PC-3 (cell line): ENCODE measurements at regions of chr6 and their contacts with region 1.

Region 1: DNA sequence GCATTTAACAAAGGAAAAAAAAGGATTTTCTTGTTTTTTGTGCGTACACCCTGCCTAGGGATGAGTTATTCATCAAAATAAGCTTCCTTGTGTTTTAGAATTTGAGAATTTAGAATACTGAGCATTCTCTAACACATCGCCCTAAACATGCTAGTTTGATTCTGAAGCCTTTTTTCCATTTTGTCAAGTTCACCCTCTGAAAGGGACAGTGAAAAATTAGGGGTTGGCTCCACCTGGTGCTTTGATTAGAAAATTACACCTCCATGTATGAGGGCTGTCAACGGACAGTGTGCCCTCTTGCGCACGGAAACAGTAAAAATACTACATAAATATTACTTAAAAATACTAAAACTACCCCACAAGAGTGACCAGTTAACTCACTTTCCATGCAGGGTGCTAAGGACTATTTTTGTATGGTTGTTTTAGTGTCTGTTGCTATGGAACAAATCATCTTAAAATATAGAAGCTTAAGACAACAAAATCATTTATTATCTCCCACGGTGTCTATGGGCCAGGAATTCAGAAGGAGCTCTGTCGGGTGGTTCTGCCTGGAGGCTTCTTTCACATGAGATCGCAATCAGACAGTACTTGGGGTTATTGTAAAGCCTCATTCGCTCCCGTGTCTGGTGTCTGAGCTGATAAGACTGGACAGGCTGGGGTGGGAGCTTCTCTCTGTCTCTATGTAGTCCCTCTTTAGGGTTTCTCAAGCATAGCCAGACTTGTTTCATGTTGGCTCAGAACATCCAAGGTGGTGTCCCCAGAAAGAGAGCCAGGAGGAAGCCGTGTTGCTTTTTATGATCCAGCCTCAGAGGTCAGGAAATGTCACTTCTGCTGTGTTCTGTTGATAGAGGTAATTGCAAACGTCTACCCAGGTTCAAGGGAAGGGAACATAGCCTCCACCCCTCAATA is 41.1 kb upstream of the TMEM170B start:
- DNase-seq: peak; percentile 87
- ATAC-seq: peak; percentile 74
- H3K4me3 ChIP-seq: no peak overlapping the region
- H3K27ac ChIP-seq: peak overlapping the region; percentile 22; the same call in 1 of the 2 replicates
- H3K4me1 ChIP-seq: peaks cover 26% of the 10 kb centered on the region
- H3K27me3 ChIP-seq: no peaks in the 10 kb centered on the region
- CTCF ChIP-seq: peak; percentile 97

Region 2: GRCh38 chr6:10954590-10955010 is 541.8 kb before region 1 on chr6:
- CTCF ChIA-PET with region 1: interaction called, 4 read pairs
- POLR2A ChIA-PET with region 1: no interaction called
- intact Hi-C with region 1: loop called (anchors 1 kb)
- DNase-seq: peak; percentile 83
- ATAC-seq: peak; percentile 64
- H3K4me3 ChIP-seq: no peak overlapping the region
- H3K27ac ChIP-seq: no peak overlapping the region
- H3K4me1 ChIP-seq: peaks cover 10% of the 10 kb centered on the region
- H3K27me3 ChIP-seq: peaks cover 11% of the 10 kb centered on the region
- CTCF ChIP-seq: peak; percentile 92

Region 3: DNA sequence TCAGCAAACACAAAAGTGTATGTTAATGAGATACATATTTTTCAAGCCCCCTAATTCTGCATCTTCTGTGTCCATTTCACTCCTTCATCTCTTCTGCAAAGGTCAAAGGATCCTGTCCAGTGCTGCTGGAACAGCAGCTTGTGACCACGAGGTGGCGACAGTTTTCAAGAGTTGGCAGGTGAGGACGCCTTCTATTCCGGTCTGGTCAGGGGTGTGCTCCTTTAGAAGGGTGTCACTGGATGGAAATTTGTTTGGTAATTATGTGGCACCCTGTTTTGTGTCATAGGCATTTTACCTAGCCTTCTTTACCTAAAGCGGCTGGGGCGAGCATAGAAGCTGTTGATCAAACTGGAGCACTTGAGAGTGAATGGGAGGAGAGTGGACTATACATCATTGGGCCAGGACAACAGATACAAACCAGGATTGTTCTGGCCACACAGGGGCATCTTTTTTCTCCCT is 352.0 kb before region 1 on chr6:
- CTCF ChIA-PET with region 1: interaction called, 4 read pairs
- POLR2A ChIA-PET with region 1: no interaction called
- intact Hi-C with region 1: loop called (anchors 1 kb)
- DNase-seq: peak; percentile 86
- ATAC-seq: peak; percentile 92
- H3K4me3 ChIP-seq: no peak overlapping the region
- H3K27ac ChIP-seq: no peak overlapping the region
- H3K4me1 ChIP-seq: peaks cover 15% of the 10 kb centered on the region
- H3K27me3 ChIP-seq: no peaks in the 10 kb centered on the region
- CTCF ChIP-seq: peak; percentile 99

Region 4: GRCh38 chr6:11172501-11173332 is 323.7 kb before region 1 on chr6:
- CTCF ChIA-PET with region 1: no interaction called
- POLR2A ChIA-PET with region 1: no interaction called
- intact Hi-C with region 1: loop called (anchors 1 kb)
- DNase-seq: peak; percentile 71
- ATAC-seq: peak; percentile 59
- H3K4me3 ChIP-seq: no peak overlapping the region
- H3K27ac ChIP-seq: no peak overlapping the region
- H3K4me1 ChIP-seq: no peaks in the 10 kb centered on the region
- H3K27me3 ChIP-seq: no peaks in the 10 kb centered on the region
- CTCF ChIP-seq: peak; percentile 93

Region 5: DNA sequence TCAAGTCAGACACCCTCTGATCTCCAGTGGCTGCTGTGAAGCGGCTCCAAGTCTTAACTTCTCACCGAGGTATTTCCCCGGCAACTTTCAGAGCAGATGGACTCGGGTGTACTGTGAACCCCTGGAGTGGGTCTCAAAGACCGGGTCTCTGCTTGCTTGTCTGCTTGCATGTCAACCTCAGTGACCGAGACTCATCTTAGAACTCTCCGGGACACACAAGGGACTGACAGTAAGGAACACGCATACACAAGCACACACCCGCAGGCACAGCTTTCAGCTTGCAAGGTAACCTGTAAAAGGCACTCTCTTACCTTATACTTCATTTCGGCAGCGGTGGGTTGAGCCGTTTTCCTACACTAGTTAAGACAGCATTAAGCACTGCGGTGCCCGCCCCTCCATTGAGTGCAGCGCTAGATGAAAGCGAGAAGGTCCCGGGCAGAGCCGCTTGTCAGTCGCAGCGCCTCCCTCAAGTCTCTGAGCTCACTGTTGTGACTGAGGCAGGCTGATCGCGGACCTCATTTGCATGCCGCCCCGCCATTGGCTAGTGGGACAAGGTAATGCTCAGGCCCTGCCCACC is 264.1 kb before region 1 on chr6 and contains the start of gene NEDD9:
- CTCF ChIA-PET with region 1: no interaction called
- POLR2A ChIA-PET with region 1: interaction called, 3 read pairs
- intact Hi-C with region 1: loop called (anchors 1 kb)
- DNase-seq: peak; percentile 96
- ATAC-seq: peak; percentile 93
- H3K4me3 ChIP-seq: peak within 1 kb of the TSS; percentile 97
- H3K27ac ChIP-seq: peak within 1 kb of the TSS; percentile 81
- H3K4me1 ChIP-seq: peaks cover 36% of the 10 kb centered on the region
- H3K27me3 ChIP-seq: no peaks in the 10 kb centered on the region
- CTCF ChIP-seq: no peak
- total RNA-seq, gene NEDD9: 12.1 and 13.9 TPM in 2 replicates

Region 6: DNA sequence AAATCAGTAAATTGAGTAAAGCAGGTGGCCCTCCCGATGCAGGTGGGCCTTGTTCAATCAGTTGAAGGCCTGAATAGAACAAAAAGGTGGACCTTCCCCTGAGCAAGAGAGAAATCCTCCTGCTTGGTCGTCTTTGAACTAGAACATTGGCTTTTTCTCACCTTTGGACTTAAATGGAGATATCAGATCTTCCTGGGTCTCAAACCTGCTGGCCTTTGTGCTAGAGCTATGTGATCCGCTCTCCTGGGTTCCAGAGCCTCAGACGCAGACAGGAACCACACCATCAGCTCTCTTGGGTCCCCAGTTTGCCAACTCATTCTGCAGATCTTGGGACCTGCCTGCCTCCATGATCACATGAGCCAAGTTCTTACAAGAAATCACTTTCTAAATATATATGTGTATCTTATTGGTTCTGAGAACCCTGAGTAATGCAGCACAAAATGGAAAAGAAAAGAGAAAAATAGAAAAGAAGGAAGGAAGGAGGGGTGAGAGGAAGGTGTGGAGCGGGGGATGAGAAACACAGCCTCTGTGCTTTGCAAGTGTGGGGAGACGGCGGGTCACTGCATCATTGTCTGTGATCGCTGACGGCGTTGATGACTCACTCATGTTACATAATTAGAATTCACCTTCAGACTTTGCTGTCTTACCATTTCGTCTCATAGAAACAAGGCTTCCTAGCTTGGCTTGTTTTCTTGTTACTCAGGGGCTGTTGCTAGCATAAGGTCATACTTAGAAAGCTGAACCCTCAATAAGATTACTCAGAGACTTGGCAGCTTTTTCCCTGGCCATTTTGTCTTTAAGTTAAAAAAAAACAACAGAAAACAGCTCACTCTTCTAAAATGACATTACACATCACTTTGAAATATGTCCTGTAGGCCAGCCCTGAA is 178.3 kb before region 1 on chr6:
- CTCF ChIA-PET with region 1: interaction called, 3 read pairs
- POLR2A ChIA-PET with region 1: no interaction called
- intact Hi-C with region 1: loop called (anchors 2 kb)
- DNase-seq: peak; percentile 98
- ATAC-seq: peak; percentile 61
- H3K4me3 ChIP-seq: no peak overlapping the region
- H3K27ac ChIP-seq: peak overlapping the region; percentile 89
- H3K4me1 ChIP-seq: peaks cover 62% of the 10 kb centered on the region
- H3K27me3 ChIP-seq: no peaks in the 10 kb centered on the region
- CTCF ChIP-seq: no peak

Region 7: DNA sequence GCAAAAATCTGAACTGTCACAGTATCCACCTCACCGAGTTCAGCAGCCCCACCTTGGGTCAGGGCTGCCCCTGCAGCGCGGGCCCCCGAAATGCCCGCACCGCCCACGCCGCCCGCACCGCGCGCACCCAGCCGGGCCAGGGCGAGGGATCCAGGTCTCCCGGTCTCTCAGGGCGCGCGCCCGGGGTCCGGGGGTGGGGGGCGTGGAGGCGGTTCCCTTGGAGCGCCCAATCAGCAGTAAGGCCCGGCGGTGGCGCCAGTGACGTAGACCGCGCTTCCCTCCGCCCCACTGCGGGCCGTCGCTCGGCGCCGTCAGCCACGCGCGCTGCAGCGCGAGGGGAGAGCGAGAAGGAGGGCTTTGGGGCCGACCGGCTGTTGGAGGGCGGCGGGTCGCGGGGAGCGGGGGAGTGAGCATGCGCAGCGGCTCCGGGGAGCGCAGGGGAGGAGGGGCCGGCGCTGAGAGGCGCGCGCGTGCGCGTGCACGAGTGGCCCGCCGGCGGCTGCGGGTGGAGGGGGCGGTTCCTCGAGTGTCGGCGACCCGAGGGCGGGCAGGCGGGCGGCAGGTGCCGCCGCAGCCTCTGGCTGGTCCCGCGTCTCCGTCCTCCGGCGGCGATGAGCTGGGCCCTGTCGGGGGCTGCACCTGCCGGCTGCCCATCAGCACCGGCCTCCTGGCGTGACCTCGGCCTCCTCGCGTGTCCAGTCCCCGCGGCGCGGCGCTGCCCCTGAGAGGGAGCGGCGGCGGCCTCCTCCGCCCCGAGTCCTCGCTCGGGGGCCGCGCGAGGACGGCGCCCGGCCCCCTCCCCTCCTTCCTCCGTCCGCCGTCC is 41.0 kb after region 1 on chr6 and contains the start of gene TMEM170B:
- CTCF ChIA-PET with region 1: no interaction called
- POLR2A ChIA-PET with region 1: no interaction called
- intact Hi-C with region 1: loop called (anchors 5 kb)
- DNase-seq: peak; percentile 81
- ATAC-seq: peak; percentile 94
- H3K4me3 ChIP-seq: peak within 1 kb of the TSS; percentile 70
- H3K27ac ChIP-seq: no peak within 1 kb of the TSS
- H3K4me1 ChIP-seq: peaks cover 9% of the 10 kb centered on the region
- H3K27me3 ChIP-seq: peaks cover 10% of the 10 kb centered on the region; the same call in 1 of the 2 replicates
- CTCF ChIP-seq: no peak
- total RNA-seq, gene TMEM170B: 0.52 and 0.66 TPM in 2 replicates

Region 8: DNA sequence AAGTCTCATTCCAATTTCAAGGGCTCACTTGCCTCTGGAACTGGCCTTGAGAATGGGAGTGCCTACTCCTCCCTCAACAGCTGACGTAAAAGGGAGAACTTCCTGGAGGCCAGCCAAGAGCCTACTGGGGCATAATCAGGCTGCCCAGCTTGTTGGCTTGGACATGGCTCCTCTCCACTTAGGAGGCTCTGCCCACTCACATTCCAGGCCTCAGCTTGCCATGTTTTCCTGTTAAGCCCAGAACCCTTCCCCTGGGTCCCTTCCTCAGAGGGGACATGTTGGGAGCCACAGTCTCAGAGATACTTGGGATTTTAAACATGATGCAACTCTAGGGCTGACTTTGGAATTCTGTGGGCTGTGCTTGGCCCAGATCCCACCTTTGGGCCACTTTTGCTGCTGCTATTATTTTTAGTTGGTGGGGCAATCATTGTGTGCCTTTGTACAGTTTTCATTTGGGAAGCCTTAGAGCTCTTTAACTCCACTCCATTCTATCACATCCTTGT is 313.7 kb after region 1 on chr6:
- CTCF ChIA-PET with region 1: no interaction called
- POLR2A ChIA-PET with region 1: no interaction called
- intact Hi-C with region 1: no loop called
- DNase-seq: peak; percentile 20
- ATAC-seq: no peak
- H3K4me3 ChIP-seq: no peak overlapping the region
- H3K27ac ChIP-seq: no peak overlapping the region
- H3K4me1 ChIP-seq: peaks cover 3% of the 10 kb centered on the region
- H3K27me3 ChIP-seq: no peaks in the 10 kb centered on the region
- CTCF ChIP-seq: no peak

Region 9: GRCh38 chr6:12467706-12468670 is 971.6 kb after region 1 on chr6:
- CTCF ChIA-PET with region 1: no interaction called
- POLR2A ChIA-PET with region 1: no interaction called
- intact Hi-C with region 1: no loop called
- DNase-seq: no peak
- ATAC-seq: no peak
- H3K4me3 ChIP-seq: no peak overlapping the region
- H3K27ac ChIP-seq: no peak overlapping the region
- H3K4me1 ChIP-seq: peaks cover 8% of the 10 kb centered on the region; the same call in 1 of the 2 replicates
- H3K27me3 ChIP-seq: no peaks in the 10 kb centered on the region
- CTCF ChIP-seq: no peak